CD8-positive, alpha-beta memory T cell (primary cell): ENCODE measurements at regions of chr1 and their contacts with region 1.

Region 1: DNA sequence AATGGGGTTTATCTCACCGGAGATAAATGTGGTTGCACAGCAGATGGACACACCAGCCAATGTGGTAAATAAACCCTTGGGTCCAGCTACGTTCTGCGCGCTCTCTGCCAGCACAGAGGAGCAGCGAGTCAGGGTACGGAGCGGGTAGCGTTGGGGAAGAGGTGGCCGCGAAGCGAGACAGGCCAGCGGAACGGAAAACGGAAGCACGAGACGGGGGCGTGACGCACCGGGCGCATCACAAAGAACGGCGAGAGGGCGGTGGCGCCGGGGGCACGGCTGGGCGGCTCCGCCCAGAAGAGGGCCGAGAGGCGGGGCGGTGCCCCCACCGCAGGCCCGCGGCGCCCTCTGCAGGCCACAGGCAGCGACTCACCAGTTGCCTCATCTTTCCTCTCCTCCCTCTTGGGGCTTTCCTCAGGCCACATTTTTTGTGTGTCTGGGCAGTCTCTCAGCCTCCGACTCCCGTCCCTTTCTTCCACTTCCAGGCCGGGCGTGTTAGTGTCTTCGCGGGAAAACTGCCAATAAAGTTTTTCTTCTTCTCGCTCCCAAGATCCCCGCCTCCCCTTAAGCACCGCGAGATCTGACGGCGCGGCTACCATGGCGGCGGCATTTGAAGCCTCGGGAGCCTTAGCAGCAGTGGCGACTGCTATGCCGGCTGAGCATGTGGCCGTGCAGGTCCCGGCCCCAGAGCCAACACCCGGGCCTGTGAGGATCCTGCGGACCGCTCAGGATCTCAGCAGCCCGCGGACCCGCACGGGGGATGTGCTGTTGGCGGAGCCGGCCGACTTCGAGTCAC is at the start of gene DDX20:
- DNase-seq: peak; percentile 92 to 95 (median 95)
- H3K4me3 ChIP-seq: peak within 1 kb of the TSS; percentile 86
- H3K4me3 Mint-ChIP-seq: peak within 1 kb of the TSS; percentile 89 to 99 (median 95)
- H3K27ac ChIP-seq: peak within 1 kb of the TSS; percentile 85
- H3K27ac Mint-ChIP-seq: peak within 1 kb of the TSS; percentile 97 to 99 (median 98)
- H3K4me1 ChIP-seq: peaks cover 19% of the 10 kb centered on the region
- H3K4me1 Mint-ChIP-seq: peaks cover 35 to 52% (median 41%) of the 10 kb centered on the region in 3 donors
- H3K27me3 ChIP-seq: no peaks in the 10 kb centered on the region
- H3K27me3 Mint-ChIP-seq: peaks cover 0 to 1% of the 10 kb centered on the region in 2 donors
- total RNA-seq, gene DDX20: 21.8 to 22.7 TPM

Region 2: GRCh38 chr1:111739194-111739924 is 16.2 kb before region 1 on chr1 and contains the start of gene INKA2:
- CTCF ChIA-PET with region 1: interaction called, 19 read pairs
- POLR2A ChIA-PET with region 1: interaction called, 15 read pairs
- DNase-seq: peak; percentile 37 to 69 (median 50)
- H3K4me3 ChIP-seq: peak within 1 kb of the TSS; percentile 74
- H3K4me3 Mint-ChIP-seq: peak within 1 kb of the TSS; percentile 85 to 96 (median 89)
- H3K27ac ChIP-seq: no peak within 1 kb of the TSS
- H3K27ac Mint-ChIP-seq: peak within 1 kb of the TSS in 7 of 8 donors; percentile 21 to 91 (median 85)
- H3K4me1 ChIP-seq: peaks cover 22% of the 10 kb centered on the region
- H3K4me1 Mint-ChIP-seq: peaks cover 15 to 26% (median 16%) of the 10 kb centered on the region in 3 donors
- H3K27me3 ChIP-seq: peaks cover 30% of the 10 kb centered on the region
- H3K27me3 Mint-ChIP-seq: peaks cover 16% of the 10 kb centered on the region in 2 donors
- total RNA-seq, gene INKA2: 1.8 to 3.8 TPM

Region 3: GRCh38 chr1:111769517-111770146 is 14.1 kb after region 1 on chr1:
- CTCF ChIA-PET with region 1: interaction called, 31 read pairs
- POLR2A ChIA-PET with region 1: no interaction called
- DNase-seq: peak in 3 of 5 donors; percentile 38 to 53 (median 49)
- H3K4me3 ChIP-seq: no peak overlapping the region
- H3K4me3 Mint-ChIP-seq: no peak overlapping the region
- H3K27ac ChIP-seq: no peak overlapping the region
- H3K27ac Mint-ChIP-seq: peak overlapping the region in 6 of 8 donors; percentile 1 to 65 (median 24)
- H3K4me1 ChIP-seq: no peaks in the 10 kb centered on the region
- H3K4me1 Mint-ChIP-seq: peaks cover 2 to 6% (median 5%) of the 10 kb centered on the region in 3 donors
- H3K27me3 ChIP-seq: no peaks in the 10 kb centered on the region
- H3K27me3 Mint-ChIP-seq: no peaks in the 10 kb centered on the region